ENCODE measurements at regions of chr3 and their contacts with region 1.

Region 1: GRCh38 chr3:195385526-195385925 is 57.3 kb downstream of the ACAP2 start:
- DNase-seq: peak; percentile 14
- H3K4me3 Mint-ChIP-seq: peak overlapping the region; percentile 0
- H3K27ac Mint-ChIP-seq: peak overlapping the region; percentile 2
- H3K4me1 Mint-ChIP-seq: peaks cover 66% of the 10 kb centered on the region
- H3K27me3 Mint-ChIP-seq: no peaks in the 10 kb centered on the region
- CTCF ChIP-seq: no peak

Region 2: DNA sequence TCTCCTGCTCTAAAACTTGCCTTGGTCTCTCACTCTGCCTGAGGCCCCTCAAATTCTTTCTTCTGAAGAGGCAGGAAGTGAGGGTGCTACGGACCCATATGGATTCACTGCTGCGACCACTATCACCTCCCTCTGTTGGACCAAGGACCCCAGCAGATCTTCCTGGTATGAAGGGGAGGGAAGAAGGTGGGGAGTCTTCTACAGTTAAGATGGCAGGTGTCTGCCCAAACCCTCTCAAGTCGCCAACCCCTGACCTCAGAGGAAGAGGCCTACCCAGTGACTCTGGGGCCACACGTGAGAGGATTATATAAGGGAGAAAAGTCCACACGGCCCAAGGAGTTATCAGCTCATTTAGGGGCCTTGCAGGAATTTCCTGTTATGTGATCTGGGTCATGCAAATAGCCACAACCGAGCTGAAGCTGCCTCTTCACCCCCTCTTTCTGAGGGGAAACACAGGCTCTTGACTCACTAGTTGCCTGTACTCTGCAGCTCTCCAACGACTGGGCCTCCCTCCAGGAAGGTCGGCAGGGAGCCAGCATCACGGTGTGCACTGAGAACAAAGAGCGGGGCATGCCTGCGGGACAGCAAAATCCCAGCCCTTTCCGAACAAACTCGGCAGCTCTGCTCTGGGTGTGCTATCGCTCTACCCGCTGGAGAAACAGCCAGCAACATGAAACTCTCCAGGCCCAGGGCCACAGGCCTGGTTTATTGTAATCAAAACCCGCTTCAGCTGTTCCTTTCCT is 230.6 kb before region 1 on chr3:
- CTCF ChIA-PET with region 1: no interaction called
- intact Hi-C with region 1: no loop called
- DNase-seq: peak; percentile 90
- H3K4me3 Mint-ChIP-seq: no peak overlapping the region
- H3K27ac Mint-ChIP-seq: peak overlapping the region; percentile 57
- H3K4me1 Mint-ChIP-seq: peaks cover 68% of the 10 kb centered on the region
- H3K27me3 Mint-ChIP-seq: no peaks in the 10 kb centered on the region
- CTCF ChIP-seq: no peak

Region 3: GRCh38 chr3:195307711-195308110 is 77.8 kb before region 1 on chr3:
- CTCF ChIA-PET with region 1: no interaction called
- intact Hi-C with region 1: loop called (anchors 5 kb)
- DNase-seq: no peak
- H3K4me3 Mint-ChIP-seq: no peak overlapping the region
- H3K27ac Mint-ChIP-seq: peak overlapping the region; percentile 36
- H3K4me1 Mint-ChIP-seq: peaks cover 13% of the 10 kb centered on the region
- H3K27me3 Mint-ChIP-seq: no peaks in the 10 kb centered on the region
- CTCF ChIP-seq: no peak

Region 4: DNA sequence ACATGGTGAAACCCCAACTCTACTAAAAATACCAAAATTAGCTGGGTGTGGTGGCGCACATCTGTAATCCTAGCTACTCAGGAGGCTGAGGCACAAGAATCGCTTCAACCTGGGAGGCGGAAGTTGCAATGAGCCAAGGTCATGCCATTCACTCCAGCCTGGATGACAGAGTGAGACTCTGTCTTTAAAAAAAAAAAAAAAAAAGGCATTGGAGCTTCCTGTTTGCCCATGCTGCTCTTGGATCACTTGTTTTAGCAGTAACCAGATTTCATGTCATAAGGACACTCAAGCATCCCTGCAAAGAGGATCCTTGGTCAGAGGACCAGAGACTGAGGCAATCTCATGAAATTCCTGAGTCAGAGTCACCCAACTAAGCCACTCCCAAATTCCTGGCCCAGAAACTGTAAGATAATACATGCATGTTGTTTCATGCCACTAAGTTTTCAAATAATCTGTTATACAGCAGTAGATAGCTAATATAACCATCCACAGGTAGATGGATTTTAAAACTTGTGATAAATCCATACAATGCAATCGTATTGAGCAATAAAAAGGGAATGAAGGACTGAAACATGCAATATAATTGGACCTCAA is 32.5 kb before region 1 on chr3:
- CTCF ChIA-PET with region 1: interaction called, 4 read pairs
- intact Hi-C with region 1: loop called (anchors 5 kb)
- DNase-seq: peak; percentile 47
- H3K4me3 Mint-ChIP-seq: no peak overlapping the region
- H3K27ac Mint-ChIP-seq: peak overlapping the region; percentile 80
- H3K4me1 Mint-ChIP-seq: peaks cover 25% of the 10 kb centered on the region
- H3K27me3 Mint-ChIP-seq: no peaks in the 10 kb centered on the region
- CTCF ChIP-seq: no peak

Region 5: DNA sequence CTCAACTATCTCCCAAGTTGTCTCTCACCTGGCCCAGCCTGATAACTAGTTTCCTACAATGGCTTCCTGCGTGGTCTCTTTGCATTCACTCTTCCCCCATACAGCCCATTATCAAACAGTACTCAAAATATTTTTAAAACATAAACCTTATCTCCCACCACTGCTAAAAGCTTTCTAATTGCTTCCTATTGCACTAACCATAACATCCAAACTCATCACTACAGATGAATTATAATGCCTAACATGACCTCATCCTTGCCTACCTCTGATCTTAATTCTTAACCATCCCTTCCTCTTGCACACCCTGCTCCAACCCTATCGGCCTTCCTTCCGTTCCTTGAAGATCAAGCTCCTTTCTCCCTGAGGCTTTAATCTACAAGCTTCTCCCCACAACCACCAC is 40.3 kb after region 1 on chr3:
- CTCF ChIA-PET with region 1: no interaction called
- intact Hi-C with region 1: no loop called
- DNase-seq: no peak
- H3K4me3 Mint-ChIP-seq: no peak overlapping the region
- H3K27ac Mint-ChIP-seq: no peak overlapping the region
- H3K4me1 Mint-ChIP-seq: no peaks in the 10 kb centered on the region
- H3K27me3 Mint-ChIP-seq: no peaks in the 10 kb centered on the region
- CTCF ChIP-seq: no peak

Region 6: GRCh38 chr3:195442573-195443390 is 57.3 kb after region 1 on chr3 and contains the start of gene ACAP2:
- CTCF ChIA-PET with region 1: interaction called, 5 read pairs
- intact Hi-C with region 1: loop called (anchors 1 kb)
- DNase-seq: peak; percentile 100
- H3K4me3 Mint-ChIP-seq: peak within 1 kb of the TSS; percentile 100
- H3K27ac Mint-ChIP-seq: peak within 1 kb of the TSS; percentile 94
- H3K4me1 Mint-ChIP-seq: peaks cover 32% of the 10 kb centered on the region
- H3K27me3 Mint-ChIP-seq: no peaks in the 10 kb centered on the region
- CTCF ChIP-seq: no peak
- total RNA-seq, gene ACAP2: 74.0 TPM in 2 replicates

Region 7: GRCh38 chr3:196483161-196483560 is 1097.6 kb after region 1 on chr3:
- CTCF ChIA-PET with region 1: no interaction called
- intact Hi-C with region 1: no loop called
- DNase-seq: no peak
- H3K4me3 Mint-ChIP-seq: no peak overlapping the region
- H3K27ac Mint-ChIP-seq: no peak overlapping the region
- H3K4me1 Mint-ChIP-seq: no peaks in the 10 kb centered on the region
- H3K27me3 Mint-ChIP-seq: no peaks in the 10 kb centered on the region
- CTCF ChIP-seq: no peak

Measured in Calu3 (cell line).